ENCODE measurements at regions of chr16 and their contacts with region 1.

Region 1: DNA sequence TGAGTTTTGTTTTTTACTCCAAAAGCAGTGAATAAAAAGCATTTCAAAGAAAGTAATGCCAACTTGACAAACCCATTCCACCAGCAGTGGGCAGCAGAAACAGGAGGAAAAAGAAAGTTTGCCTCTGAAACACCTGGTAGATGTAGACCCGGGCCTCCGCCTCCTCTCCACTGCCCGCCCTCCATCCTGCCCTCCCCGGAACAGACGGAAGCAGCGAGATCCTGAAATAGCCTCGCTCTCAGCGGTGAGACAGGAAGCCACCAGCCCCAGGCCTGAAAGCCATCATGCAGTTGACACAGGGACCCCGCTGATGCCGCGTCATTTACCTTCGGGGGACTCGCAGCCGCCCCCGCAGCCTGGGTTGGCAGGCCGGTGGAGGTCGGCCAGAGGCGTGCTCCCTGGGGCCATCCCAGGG is 67.8 kb downstream of the C16orf78 start:
- DNase-seq: no peak
- H3K4me3 ChIP-seq: no peak overlapping the region
- H3K27ac ChIP-seq: no peak overlapping the region
- H3K4me1 ChIP-seq: no peaks in the 10 kb centered on the region
- H3K27me3 ChIP-seq: peaks cover 5% of the 10 kb centered on the region
- CTCF ChIP-seq: no peak

Region 2: DNA sequence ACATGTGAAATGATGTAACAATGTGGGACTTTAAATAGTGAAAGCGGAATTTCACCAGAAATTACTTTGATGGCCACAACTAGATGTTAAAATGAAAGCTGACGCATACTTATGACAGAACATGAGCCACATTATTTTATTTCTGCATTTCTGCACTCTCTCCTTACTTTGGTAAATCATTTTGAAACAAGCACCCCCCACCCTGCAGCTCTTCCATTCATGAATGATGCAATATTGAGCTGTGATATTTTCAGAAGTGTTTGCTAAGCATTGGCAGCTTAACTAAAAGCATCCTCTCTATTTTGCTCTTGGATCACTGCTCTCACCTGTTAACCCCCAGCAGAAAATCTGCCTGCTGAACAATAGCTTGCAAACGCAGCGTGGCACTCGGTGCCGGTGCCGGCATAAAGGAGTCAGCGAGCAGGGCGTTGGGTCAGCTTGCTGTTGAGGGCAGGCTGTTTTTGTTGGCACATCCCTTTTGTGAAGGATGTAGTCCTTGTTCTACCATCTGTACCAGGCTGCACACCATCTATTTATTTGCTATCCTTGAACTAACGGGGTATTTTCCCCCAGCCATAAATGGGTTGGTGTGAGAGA is 128.9 kb before region 1 on chr16:
- dilution Hi-C with region 1: no loop called
- DNase-seq: no peak
- H3K4me3 ChIP-seq: no peak overlapping the region
- H3K27ac ChIP-seq: no peak overlapping the region
- H3K4me1 ChIP-seq: no peaks in the 10 kb centered on the region
- H3K27me3 ChIP-seq: no peaks in the 10 kb centered on the region
- CTCF ChIP-seq: no peak

Region 3: DNA sequence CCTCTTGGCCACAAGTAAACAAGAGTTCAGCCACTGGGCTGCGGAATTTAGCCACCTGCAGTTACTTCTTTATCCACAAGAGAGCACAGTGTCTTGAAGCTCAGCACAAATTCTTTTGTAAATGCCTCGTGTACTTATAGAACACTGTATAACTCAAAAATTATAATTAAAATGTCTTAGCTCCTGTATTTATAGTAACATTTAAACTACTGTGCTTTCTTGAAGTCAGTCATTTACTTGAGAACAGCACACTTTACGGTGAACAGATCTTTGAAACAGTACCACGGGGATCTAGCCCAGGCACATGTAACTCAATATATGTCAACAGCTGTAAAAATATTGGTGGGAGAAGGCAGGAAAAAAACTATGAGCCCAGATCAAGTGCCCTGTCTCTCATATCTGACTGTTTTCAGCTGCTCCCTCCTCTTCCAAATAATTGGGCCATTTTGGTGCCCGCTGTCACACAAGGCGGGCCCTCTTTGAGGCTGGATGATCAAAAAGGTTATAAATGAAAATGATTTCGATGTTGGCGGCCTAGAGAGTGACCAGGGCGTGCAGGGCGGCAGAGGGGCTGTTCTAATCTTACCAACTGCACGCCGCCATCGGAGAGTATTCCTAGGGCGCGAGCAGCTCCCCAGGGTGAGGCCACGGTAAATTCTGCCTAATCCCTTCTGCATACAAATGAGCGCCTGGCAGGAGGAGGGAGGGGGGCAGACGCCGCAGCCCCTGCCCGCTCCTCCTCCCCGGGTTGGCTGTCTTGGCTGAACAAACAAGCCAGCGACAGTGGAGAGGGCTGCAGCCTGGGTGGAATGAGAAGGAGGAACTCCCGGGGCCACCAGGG is 115.5 kb after region 1 on chr16:
- dilution Hi-C with region 1: no loop called
- DNase-seq: no peak
- H3K4me3 ChIP-seq: no peak overlapping the region
- H3K27ac ChIP-seq: no peak overlapping the region
- H3K4me1 ChIP-seq: no peaks in the 10 kb centered on the region
- H3K27me3 ChIP-seq: no peaks in the 10 kb centered on the region
- CTCF ChIP-seq: no peak

Region 4: GRCh38 chr16:49876716-49877129 is 435.4 kb after region 1 on chr16:
- dilution Hi-C with region 1: loop called (anchors 25 kb)
- DNase-seq: no peak
- H3K4me3 ChIP-seq: no peak overlapping the region
- H3K27ac ChIP-seq: no peak overlapping the region
- H3K4me1 ChIP-seq: no peaks in the 10 kb centered on the region
- H3K27me3 ChIP-seq: peaks cover 19% of the 10 kb centered on the region
- CTCF ChIP-seq: peak; percentile 43 to 88 (median 71)

Measured in keratinocyte (primary cell).